Right ventricle myocardium inferior (tissue), 1 donor: ENCODE measurements at regions of chr5 and their contacts with region 1.

Region 1: GRCh38 chr5:140145818-140146522 is 20.2 kb downstream of the IGIP start:
- DNase-seq: peak; percentile 87
- ATAC-seq: peak; percentile 93

Region 2: DNA sequence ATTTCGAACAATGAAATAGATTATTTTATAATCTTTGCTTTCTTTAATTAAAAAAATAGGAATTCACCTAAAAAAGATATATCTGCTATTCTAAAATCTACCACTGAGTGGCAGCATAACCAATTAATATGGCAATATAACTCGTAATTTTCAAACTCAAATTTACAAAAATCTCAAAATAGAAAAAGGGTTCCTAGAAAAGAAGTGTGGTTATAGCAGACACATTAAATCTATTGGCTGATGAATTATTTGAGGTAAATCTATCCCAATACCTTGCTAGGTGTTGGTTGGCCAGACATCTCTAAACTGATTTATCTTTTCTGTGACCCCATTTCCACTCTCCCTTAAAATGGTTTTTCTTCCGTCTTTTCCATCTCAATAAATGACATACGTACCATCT is 72.7 kb before region 1 on chr5:
- intact Hi-C with region 1: loop called (anchors 2 kb)
- DNase-seq: no peak
- ATAC-seq: no peak

Region 3: DNA sequence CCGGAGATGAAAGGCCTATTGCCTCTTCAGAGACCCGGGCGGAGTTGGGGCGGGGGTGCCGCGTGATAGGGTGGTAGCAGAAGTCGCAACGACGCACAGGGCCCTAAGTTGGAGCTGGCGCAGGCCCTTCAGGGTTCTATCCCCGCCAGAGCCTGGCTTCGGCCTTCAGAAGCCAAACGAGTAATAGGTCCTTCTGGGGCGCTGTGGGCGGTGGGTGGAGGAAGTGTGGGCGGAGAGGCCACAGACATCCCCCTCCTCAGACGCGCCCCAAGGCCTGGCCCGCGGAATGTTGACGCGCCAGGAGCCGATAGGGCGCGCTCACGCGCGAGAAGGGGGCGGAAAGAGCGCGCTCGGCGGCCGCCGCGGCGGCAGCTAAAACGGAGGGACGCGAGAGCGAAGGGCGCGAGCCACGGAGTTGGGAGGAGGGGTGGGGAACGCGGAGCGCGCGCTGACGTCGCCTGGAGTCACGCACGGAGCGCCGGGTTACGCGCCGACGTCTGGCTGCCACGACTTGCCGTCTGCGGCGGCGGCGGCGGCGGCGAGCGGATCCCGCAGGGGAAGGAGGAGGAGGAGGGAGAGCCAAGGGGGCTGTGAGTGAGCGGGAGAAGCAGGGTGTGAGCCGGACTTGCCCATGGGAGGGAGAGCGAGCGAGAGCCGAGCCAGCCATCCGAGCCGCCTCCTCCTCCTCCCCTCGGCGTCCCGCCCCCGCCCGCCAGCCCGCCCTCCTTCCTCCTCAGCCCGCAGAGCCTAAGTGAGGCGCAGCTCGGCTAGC is 38.5 kb before region 1 on chr5:
- intact Hi-C with region 1: loop called (anchors 2 kb)
- DNase-seq: peak; percentile 97
- ATAC-seq: peak; percentile 98

Region 4: GRCh38 chr5:140113699-140114263 is 32.2 kb before region 1 on chr5 and contains the start of gene PURA:
- intact Hi-C with region 1: loop called (anchors 1 kb)
- DNase-seq: peak; percentile 98
- ATAC-seq: peak; percentile 95
- total RNA-seq, gene PURA: 22.2 TPM

Region 5: GRCh38 chr5:140196115-140196814 is 50.3 kb after region 1 on chr5:
- intact Hi-C with region 1: no loop called
- DNase-seq: no peak
- ATAC-seq: no peak